ENCODE measurements at regions of chr7 and their contacts with region 1.

Region 1: GRCh38 chr7:99438573-99439480 is at the starts of genes CPSF4 and PTCD1:
- DNase-seq: peak; percentile 98 to 99 (median 98)
- ATAC-seq: peak; percentile 95
- H3K4me3 ChIP-seq: peak within 1 kb of the TSS; percentile 98
- H3K27ac ChIP-seq: peak within 1 kb of the TSS; percentile 80
- H3K4me1 ChIP-seq: peaks cover 19 to 36% of the 10 kb centered on the region in 2 experiments; a peak in 4 of 5 replicates
- H3K27me3 ChIP-seq: no peaks in the 10 kb centered on the region
- CTCF ChIP-seq: no peak
- EP300 ChIP-seq: 0 out of 2 replicates have a peak, but pooled peaks have one; percentile 56
- POLR2A ChIP-seq: peak; percentile 90
- RAD21 ChIP-seq: peak; percentile 16 to 18; a peak in 1 of 4 replicates
- polyA plus RNA-seq, gene CPSF4: 16.9 to 17.4 TPM
- polyA plus RNA-seq, gene PTCD1: 0.46 to 0.57 TPM

Region 2: GRCh38 chr7:99449326-99449725 is 10.5 kb after region 1 on chr7:
- CTCF ChIA-PET with region 1: no interaction called
- POLR2A ChIA-PET with region 1: interaction called, 11 read pairs
- in situ Hi-C with region 1: no loop called
- intact Hi-C with region 1: no loop called
- DNase-seq: no peak
- ATAC-seq: no peak
- H3K4me3 ChIP-seq: no peak overlapping the region
- H3K27ac ChIP-seq: no peak overlapping the region
- H3K4me1 ChIP-seq: peaks cover 0 to 10% of the 10 kb centered on the region in 2 experiments; a peak in 1 of 5 replicates
- H3K27me3 ChIP-seq: no peaks in the 10 kb centered on the region
- CTCF ChIP-seq: no peak
- EP300 ChIP-seq: no peak
- POLR2A ChIP-seq: no peak
- RAD21 ChIP-seq: no peak

Region 3: DNA sequence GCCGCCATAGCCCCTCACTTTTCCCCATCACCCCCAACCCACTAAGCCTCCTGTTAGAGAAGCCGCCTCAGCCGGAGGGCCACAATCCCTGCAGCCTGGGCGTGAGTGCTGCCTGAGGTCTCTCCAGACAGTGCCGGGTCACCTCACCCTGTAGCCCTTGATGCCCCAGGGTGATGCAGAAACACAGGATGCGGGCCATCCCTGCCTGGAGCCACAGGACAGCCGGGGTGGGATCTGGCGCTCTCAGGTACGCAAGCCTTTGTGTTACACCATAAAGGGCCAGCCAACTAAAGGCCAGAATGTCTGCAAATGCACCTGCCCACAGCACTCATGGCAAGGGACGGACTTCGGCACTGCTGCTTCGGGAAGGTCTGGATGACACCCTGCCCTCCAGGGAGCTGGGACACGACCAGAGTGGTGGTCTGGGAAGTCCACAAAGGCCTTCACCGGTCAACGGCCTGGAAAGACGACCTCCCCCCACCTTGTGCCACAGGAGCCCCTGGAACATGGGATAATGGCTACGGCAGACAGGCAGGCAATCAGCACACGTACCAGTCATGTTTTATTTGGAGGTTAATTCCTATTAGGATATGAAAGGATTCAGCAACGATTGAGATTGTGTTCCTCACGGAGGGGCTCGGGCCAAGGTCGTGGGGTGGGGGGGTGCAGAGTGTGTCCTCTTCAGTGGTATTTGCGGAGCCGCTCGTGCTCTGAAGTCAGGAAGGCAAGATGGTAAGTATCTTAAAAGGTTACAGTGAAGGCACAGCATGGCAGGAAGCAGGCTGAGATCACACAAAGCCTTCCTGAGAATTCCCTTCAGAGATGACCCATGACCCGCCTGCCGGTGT is 19.0 kb after region 1 on chr7:
- CTCF ChIA-PET with region 1: no interaction called
- POLR2A ChIA-PET with region 1: interaction called, 10 read pairs
- in situ Hi-C with region 1: no loop called
- intact Hi-C with region 1: no loop called
- DNase-seq: no peak
- ATAC-seq: peak; percentile 13
- H3K4me3 ChIP-seq: no peak overlapping the region
- H3K27ac ChIP-seq: no peak overlapping the region
- H3K4me1 ChIP-seq: peaks cover 2 to 23% of the 10 kb centered on the region in 2 experiments; a peak in 3 of 5 replicates
- H3K27me3 ChIP-seq: no peaks in the 10 kb centered on the region
- CTCF ChIP-seq: no peak
- EP300 ChIP-seq: no peak
- POLR2A ChIP-seq: peak; percentile 79
- RAD21 ChIP-seq: no peak

Measured in K562 (cell line).